Activated CD8-positive, alpha-beta T cell treated with anti-CD3 and anti-CD28 coated beads for 36 hours (primary cell): ENCODE measurements at regions of chr4 and their contacts with region 1.

Region 1: GRCh38 chr4:165131247-165131832 is 18.7 kb upstream of the TMEM192 start:
- DNase-seq: peak; percentile 87
- ATAC-seq: peak; percentile 92
- H3K4me3 Mint-ChIP-seq: no peak overlapping the region
- H3K27ac Mint-ChIP-seq: no peak overlapping the region
- H3K4me1 Mint-ChIP-seq: peaks cover 5% of the 10 kb centered on the region
- H3K27me3 Mint-ChIP-seq: peaks cover 6% of the 10 kb centered on the region
- CTCF ChIP-seq: peak; percentile 92

Region 2: GRCh38 chr4:164918956-164919355 is 212.4 kb before region 1 on chr4:
- CTCF ChIA-PET with region 1: no interaction called
- POLR2A ChIA-PET with region 1: no interaction called
- intact Hi-C with region 1: no loop called
- DNase-seq: no peak
- ATAC-seq: no peak
- H3K4me3 Mint-ChIP-seq: no peak overlapping the region
- H3K27ac Mint-ChIP-seq: no peak overlapping the region
- H3K4me1 Mint-ChIP-seq: no peaks in the 10 kb centered on the region
- H3K27me3 Mint-ChIP-seq: peaks cover 2% of the 10 kb centered on the region
- CTCF ChIP-seq: no peak

Region 3: GRCh38 chr4:165060942-165061341 is 70.4 kb before region 1 on chr4:
- CTCF ChIA-PET with region 1: no interaction called
- POLR2A ChIA-PET with region 1: no interaction called
- intact Hi-C with region 1: no loop called
- DNase-seq: no peak
- ATAC-seq: no peak
- H3K4me3 Mint-ChIP-seq: no peak overlapping the region
- H3K27ac Mint-ChIP-seq: no peak overlapping the region
- H3K4me1 Mint-ChIP-seq: no peaks in the 10 kb centered on the region
- H3K27me3 Mint-ChIP-seq: no peaks in the 10 kb centered on the region
- CTCF ChIP-seq: peak; percentile 32

Region 4: DNA sequence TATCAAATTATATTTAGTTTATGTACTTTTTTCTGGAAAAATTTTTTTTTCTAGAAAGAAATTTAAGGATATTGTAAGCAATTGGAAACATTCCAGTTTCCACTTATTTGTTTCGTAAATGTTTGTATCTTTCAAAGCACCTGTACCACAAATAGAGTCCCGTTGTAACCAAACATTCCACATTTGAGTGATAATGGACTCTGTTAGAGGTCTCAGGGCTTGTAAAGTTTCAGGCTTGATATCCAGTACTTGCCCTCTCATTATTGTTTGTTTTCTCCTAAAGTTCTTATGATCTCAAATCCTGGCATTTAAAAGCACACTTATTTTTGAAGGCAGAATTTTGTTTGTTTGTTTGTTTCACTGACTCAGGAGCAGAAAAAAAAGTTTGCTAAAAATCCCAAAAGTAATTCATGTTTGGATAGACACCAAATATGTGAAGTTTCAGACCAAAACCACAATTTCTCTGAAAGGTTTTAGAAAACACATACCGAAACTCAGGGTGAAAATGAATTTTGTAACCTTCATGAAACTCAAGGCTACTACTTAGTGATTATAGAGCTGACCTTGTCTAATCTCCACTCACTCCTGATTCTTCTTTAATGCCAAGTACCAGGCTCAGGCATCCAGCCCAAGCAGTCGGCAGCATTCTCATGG is 13.0 kb before region 1 on chr4:
- CTCF ChIA-PET with region 1: interaction called, 31 read pairs
- POLR2A ChIA-PET with region 1: no interaction called
- intact Hi-C with region 1: no loop called
- DNase-seq: no peak
- ATAC-seq: no peak
- H3K4me3 Mint-ChIP-seq: no peak overlapping the region
- H3K27ac Mint-ChIP-seq: no peak overlapping the region
- H3K4me1 Mint-ChIP-seq: peaks cover 6% of the 10 kb centered on the region
- H3K27me3 Mint-ChIP-seq: no peaks in the 10 kb centered on the region
- CTCF ChIP-seq: no peak

Region 5: GRCh38 chr4:165201806-165202205 is 70.5 kb after region 1 on chr4:
- CTCF ChIA-PET with region 1: interaction called, 12 read pairs
- POLR2A ChIA-PET with region 1: interaction called, 3 read pairs
- intact Hi-C with region 1: loop called (anchors 5 kb)
- DNase-seq: no peak
- ATAC-seq: no peak
- H3K4me3 Mint-ChIP-seq: no peak overlapping the region
- H3K27ac Mint-ChIP-seq: no peak overlapping the region
- H3K4me1 Mint-ChIP-seq: peaks cover 48% of the 10 kb centered on the region
- H3K27me3 Mint-ChIP-seq: no peaks in the 10 kb centered on the region
- CTCF ChIP-seq: no peak

Region 6: DNA sequence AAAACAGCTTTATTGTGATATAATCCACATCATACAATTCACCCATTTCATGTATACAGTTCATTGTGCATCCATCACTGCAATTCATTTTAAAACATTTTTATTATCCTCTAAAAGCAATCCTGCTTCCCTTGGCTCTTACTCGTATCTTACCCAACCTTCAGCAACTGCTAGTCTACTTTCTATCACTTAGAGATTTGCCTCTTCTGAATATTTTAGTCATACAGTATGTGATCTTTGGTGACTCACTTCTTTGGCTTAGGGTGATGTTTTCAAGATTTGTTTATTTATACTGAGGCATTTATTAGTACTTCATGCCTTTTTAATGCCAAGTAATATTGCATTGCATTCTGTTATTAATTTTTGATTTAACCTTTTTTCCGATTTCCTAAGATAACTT is 181.2 kb after region 1 on chr4:
- CTCF ChIA-PET with region 1: interaction called, 16 read pairs
- POLR2A ChIA-PET with region 1: no interaction called
- intact Hi-C with region 1: no loop called
- DNase-seq: no peak
- ATAC-seq: no peak
- H3K4me3 Mint-ChIP-seq: no peak overlapping the region
- H3K27ac Mint-ChIP-seq: no peak overlapping the region
- H3K4me1 Mint-ChIP-seq: no peaks in the 10 kb centered on the region
- H3K27me3 Mint-ChIP-seq: no peaks in the 10 kb centered on the region
- CTCF ChIP-seq: no peak

Region 7: GRCh38 chr4:165343353-165344191 is 212.2 kb after region 1 on chr4:
- CTCF ChIA-PET with region 1: interaction called, 52 read pairs
- POLR2A ChIA-PET with region 1: no interaction called
- intact Hi-C with region 1: loop called (anchors 5 kb)
- DNase-seq: peak; percentile 10
- ATAC-seq: no peak
- H3K4me3 Mint-ChIP-seq: no peak overlapping the region
- H3K27ac Mint-ChIP-seq: peak overlapping the region; percentile 25
- H3K4me1 Mint-ChIP-seq: no peaks in the 10 kb centered on the region
- H3K27me3 Mint-ChIP-seq: no peaks in the 10 kb centered on the region
- CTCF ChIP-seq: no peak

Region 8: GRCh38 chr4:165425629-165426028 is 294.3 kb after region 1 on chr4:
- CTCF ChIA-PET with region 1: interaction called, 10 read pairs
- POLR2A ChIA-PET with region 1: no interaction called
- intact Hi-C with region 1: no loop called
- DNase-seq: no peak
- ATAC-seq: no peak
- H3K4me3 Mint-ChIP-seq: no peak overlapping the region
- H3K27ac Mint-ChIP-seq: no peak overlapping the region
- H3K4me1 Mint-ChIP-seq: peaks cover 11% of the 10 kb centered on the region
- H3K27me3 Mint-ChIP-seq: peaks cover 6% of the 10 kb centered on the region
- CTCF ChIP-seq: no peak